Sigmoid colon (tissue), 7 donors: ENCODE measurements at regions of chr11 and their contacts with region 1.

Region 1: GRCh38 chr11:2574551-2575535 is 125.0 kb downstream of the KCNQ1OT1 start:
- DNase-seq: peak; percentile 52
- H3K4me3 ChIP-seq: no peak overlapping the region
- H3K27ac ChIP-seq: no peak overlapping the region
- H3K4me1 ChIP-seq: no peaks in the 10 kb centered on the region
- H3K27me3 ChIP-seq: no peaks in the 10 kb centered on the region
- CTCF ChIP-seq: no peak
- EP300 ChIP-seq: no peak
- POLR2A ChIP-seq: no peak

Region 2: DNA sequence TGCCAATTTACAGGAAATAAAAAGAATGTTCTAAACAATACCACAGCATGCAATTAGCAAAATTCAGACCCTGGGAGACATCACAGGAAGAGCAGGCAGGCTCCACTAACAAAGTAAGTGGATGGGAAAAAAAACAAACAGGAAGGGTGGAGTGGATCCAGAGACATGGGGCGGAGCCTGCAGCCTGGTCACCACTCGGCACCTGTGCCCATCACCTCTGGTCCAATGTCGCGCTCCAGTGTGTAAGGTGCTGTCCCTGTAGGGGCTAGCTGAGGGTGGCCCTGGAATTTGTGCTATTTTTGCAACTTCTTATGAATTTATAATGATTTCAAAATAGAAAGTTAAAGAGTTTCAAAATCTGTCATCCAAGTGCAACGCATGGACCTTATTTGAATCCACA is 1077.2 kb before region 1 on chr11:
- intact Hi-C with region 1: no loop called
- DNase-seq: no peak
- H3K4me3 ChIP-seq: no peak overlapping the region
- H3K27ac ChIP-seq: no peak overlapping the region
- H3K4me1 ChIP-seq: peaks cover 0 to 44% (median 28%) of the 10 kb centered on the region in 4 donors
- H3K27me3 ChIP-seq: no peaks in the 10 kb centered on the region
- CTCF ChIP-seq: no peak
- EP300 ChIP-seq: no peak
- POLR2A ChIP-seq: no peak

Region 3: DNA sequence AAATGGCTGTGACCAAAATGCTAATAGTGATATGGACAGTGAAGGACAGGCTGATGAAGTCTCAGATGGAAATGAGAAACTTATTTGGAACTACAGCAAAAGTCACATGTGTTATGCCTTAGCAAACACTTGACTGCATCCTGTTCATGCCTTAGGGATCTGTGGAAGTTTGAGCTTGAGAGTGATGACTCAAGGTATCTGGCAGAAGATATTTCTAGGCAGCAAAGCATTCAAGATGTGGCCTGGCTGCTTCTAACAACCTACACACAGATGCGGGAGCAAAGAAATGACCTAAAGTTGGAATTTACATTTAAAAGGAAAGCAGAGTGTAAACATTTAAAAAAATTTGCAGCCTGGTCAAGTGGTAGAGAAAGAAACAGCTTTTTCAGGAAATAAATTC is 225.9 kb before region 1 on chr11:
- intact Hi-C with region 1: loop called (anchors 10 kb)
- DNase-seq: no peak
- H3K4me3 ChIP-seq: no peak overlapping the region
- H3K27ac ChIP-seq: no peak overlapping the region
- H3K4me1 ChIP-seq: no peaks in the 10 kb centered on the region
- H3K27me3 ChIP-seq: no peaks in the 10 kb centered on the region
- CTCF ChIP-seq: no peak
- EP300 ChIP-seq: no peak
- POLR2A ChIP-seq: no peak

Region 4: GRCh38 chr11:2532704-2533586 is 41.9 kb before region 1 on chr11:
- intact Hi-C with region 1: no loop called
- DNase-seq: peak; percentile 95
- H3K4me3 ChIP-seq: peak overlapping the region in 3 of 4 donors; percentile 13 to 38 (median 32)
- H3K27ac ChIP-seq: peak overlapping the region in 2 of 4 donors; percentile 2 to 64
- H3K4me1 ChIP-seq: peaks cover 0 to 21% (median 17%) of the 10 kb centered on the region in 4 donors
- H3K27me3 ChIP-seq: peaks cover 0 to 3% (median 0%) of the 10 kb centered on the region in 3 donors
- CTCF ChIP-seq: peak; percentile 99 to 100 (median 99)
- EP300 ChIP-seq: no peak
- POLR2A ChIP-seq: no peak

Region 5: GRCh38 chr11:2778630-2779498 is 204.0 kb after region 1 on chr11:
- intact Hi-C with region 1: no loop called
- DNase-seq: peak; percentile 93
- H3K4me3 ChIP-seq: peak overlapping the region in 3 of 4 donors; percentile 9 to 24 (median 12)
- H3K27ac ChIP-seq: peak overlapping the region; percentile 79 to 90 (median 84)
- H3K4me1 ChIP-seq: peaks cover 0 to 32% (median 31%) of the 10 kb centered on the region in 4 donors
- H3K27me3 ChIP-seq: no peaks in the 10 kb centered on the region
- CTCF ChIP-seq: peak in 3 of 4 experiments; percentile 30 to 53 (median 45)
- EP300 ChIP-seq: peak in 1 of 4 donors; percentile 71
- POLR2A ChIP-seq: no peak